Activated naive CD4-positive, alpha-beta T cell treated with anti-CD3 and anti-CD28 coated beads for 36 hours (primary cell): ENCODE measurements at regions of chr22 and their contacts with region 1.

Region 1: DNA sequence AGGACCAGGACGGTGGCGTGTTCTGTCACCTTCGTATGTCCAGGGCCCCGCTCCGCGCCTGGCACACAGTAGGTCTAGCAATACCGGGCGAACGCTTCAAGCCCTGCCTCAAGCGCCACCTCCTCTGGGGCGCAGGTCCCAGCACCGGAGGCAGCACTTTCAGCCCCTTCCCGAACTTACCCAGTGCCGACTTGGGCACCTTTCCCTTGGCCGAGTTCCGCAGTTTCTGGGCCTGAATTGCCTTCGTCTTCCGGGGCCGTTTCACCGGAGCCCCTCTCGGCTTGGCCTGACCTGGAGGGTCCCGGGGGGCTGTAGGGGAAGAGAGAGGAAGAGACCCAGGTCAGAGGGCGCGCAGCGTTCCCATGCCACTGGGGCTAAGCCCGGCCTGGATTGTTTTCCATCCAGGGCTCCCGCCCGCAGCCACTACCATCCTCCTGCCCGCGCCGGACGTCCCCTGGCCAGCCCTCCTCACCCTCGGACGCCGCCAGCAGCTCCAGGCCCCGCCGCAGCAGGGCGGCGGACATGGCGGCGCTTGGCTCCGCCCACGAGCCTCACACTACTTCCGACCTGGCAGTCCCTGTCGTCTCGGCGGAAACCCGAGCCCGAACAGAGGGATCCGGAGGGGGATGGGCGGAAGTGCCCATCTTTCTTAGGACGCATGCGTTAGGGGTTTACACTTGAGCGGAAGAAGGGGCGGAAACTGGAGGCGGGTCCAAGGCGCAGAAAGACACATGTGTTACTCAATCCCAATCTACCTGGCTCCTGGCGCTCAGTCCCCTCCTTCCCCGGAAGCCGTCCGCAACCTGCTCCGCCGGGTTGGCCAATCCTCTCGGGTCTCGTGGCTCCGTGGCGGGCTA is at the start of gene RPS19BP1:
- DNase-seq: peak; percentile 100
- H3K4me3 Mint-ChIP-seq: peak within 1 kb of the TSS; percentile 94
- H3K27ac Mint-ChIP-seq: peak within 1 kb of the TSS; percentile 91
- H3K4me1 Mint-ChIP-seq: peaks cover 49% of the 10 kb centered on the region
- H3K27me3 Mint-ChIP-seq: no peaks in the 10 kb centered on the region
- total RNA-seq, gene RPS19BP1: 52.0 to 56.2 TPM

Region 2: GRCh38 chr22:39319270-39320022 is 213.0 kb before region 1 on chr22 and contains the start of gene RPL3:
- CTCF ChIA-PET with region 1: interaction called, 4 read pairs
- intact Hi-C with region 1: loop called (anchors 1 kb)
- DNase-seq: peak; percentile 94
- H3K4me3 Mint-ChIP-seq: peak within 1 kb of the TSS; percentile 99
- H3K27ac Mint-ChIP-seq: peak within 1 kb of the TSS; percentile 100
- H3K4me1 Mint-ChIP-seq: peaks cover 42% of the 10 kb centered on the region
- H3K27me3 Mint-ChIP-seq: no peaks in the 10 kb centered on the region
- total RNA-seq, gene RPL3: 3,434 to 3,511 TPM

Region 3: DNA sequence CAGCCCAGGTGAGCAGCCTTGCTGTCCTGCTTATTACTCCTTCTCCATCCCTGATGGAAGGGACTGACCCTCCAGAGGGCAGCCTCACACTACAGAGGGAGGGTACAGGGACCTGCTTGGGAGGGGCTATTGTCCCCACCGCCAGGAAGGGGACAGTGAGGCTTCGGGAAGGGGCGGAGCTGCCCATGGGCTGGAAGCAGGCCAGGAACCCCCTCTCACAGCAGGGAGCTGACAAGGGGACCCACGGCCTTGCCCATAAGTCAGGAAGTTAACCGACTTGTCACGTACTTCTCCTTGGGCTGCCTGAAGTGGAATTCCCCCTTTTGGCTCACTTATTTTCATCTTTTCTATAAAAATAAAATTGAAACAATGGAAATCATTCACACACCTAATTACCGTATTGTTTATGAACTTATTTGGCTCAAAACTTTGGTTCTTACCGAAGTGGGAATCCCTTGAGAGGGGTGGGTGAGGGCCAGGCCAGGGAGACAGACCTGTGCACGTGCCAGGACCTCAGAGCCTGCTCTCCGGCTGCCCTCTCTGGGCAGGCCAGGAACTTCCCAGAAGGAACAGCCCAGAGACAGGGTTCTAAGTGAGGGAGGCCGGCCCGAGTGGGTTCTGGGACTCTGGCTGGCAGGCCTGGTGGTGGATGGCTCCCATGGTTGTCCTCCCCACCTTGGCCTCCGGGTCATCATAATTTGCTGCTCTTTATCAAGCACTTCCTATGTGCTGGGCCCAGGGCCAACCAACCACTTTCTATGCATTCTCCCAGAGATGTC is 69.8 kb before region 1 on chr22:
- CTCF ChIA-PET with region 1: no interaction called
- intact Hi-C with region 1: no loop called
- DNase-seq: no peak
- H3K4me3 Mint-ChIP-seq: no peak overlapping the region
- H3K27ac Mint-ChIP-seq: no peak overlapping the region
- H3K4me1 Mint-ChIP-seq: peaks cover 5% of the 10 kb centered on the region
- H3K27me3 Mint-ChIP-seq: peaks cover 26% of the 10 kb centered on the region

Region 4: GRCh38 chr22:39490135-39490798 is 42.2 kb before region 1 on chr22:
- CTCF ChIA-PET with region 1: interaction called, 208 read pairs
- intact Hi-C with region 1: loop called (anchors 1 kb)
- DNase-seq: peak; percentile 85
- H3K4me3 Mint-ChIP-seq: no peak overlapping the region
- H3K27ac Mint-ChIP-seq: no peak overlapping the region
- H3K4me1 Mint-ChIP-seq: peaks cover 5% of the 10 kb centered on the region
- H3K27me3 Mint-ChIP-seq: no peaks in the 10 kb centered on the region

Region 5: DNA sequence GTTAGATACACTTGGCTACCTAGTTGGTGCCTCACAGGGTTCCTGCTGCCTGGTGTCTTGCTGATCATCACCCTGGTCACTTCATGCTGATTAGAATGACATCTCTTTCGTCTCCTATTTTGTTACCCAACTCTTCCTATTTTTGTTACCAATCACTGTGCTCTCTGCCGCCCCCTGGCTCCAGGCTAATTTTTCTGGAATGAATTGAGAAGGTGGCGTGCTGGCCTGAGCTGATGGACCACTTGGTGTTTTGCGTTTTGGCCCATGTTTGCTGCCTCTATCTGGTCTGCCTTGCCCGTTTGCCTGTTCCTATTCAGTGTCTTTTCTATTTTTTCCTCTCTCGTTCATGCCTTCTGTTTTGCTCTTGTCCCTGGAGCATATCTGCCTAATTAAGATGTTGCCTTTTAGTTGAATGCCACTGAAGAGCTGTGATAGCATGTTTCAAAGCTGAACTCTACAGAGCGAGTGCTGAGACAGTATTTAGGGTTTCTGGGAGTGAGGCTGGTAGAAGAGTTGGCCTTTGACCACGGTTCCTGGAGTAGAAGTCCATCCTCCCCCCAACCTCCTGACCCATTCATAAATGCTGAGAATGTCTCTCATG is 18.0 kb before region 1 on chr22:
- CTCF ChIA-PET with region 1: interaction called, 49 read pairs
- intact Hi-C with region 1: no loop called
- DNase-seq: peak; percentile 76
- H3K4me3 Mint-ChIP-seq: no peak overlapping the region
- H3K27ac Mint-ChIP-seq: peak overlapping the region; percentile 16
- H3K4me1 Mint-ChIP-seq: peaks cover 46% of the 10 kb centered on the region
- H3K27me3 Mint-ChIP-seq: no peaks in the 10 kb centered on the region

Region 6: DNA sequence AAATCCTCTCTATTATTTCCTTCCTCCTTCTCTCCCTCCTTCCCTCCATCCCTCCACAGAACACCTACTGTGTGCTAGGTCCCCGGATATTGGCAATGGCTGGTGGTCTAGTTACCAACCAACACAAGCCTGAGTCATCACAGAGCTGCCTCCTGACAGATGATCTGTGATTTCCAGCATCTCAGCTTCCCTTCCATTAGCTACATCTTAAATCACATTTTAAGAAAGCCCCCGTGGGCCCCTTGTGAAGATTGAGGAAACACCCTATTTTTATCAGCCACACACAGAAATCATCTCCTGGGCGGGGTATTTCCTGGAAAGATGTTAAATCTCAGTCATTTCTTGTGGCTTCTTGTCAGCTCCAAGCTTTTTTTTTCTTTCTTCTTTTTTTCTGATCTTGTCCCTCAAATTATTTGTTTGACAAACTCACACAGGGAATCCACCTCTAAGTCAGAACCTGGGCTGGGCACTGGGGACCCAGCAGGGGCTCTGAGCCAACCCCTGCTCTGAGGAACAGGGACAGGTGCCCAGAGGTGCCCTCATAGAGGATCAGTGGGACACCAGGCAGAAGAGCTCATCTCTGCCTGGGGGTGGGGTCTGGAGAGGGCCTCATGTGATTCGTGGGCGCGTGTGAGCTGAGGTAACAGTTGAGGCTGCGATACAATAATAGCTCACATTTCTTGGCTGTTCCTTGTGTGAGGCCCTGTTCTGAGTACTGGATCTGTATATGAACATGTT is 80.5 kb after region 1 on chr22:
- CTCF ChIA-PET with region 1: interaction called, 3 read pairs
- intact Hi-C with region 1: loop called (anchors 1 kb)
- DNase-seq: peak; percentile 85
- H3K4me3 Mint-ChIP-seq: no peak overlapping the region
- H3K27ac Mint-ChIP-seq: peak overlapping the region; percentile 86
- H3K4me1 Mint-ChIP-seq: peaks cover 25% of the 10 kb centered on the region
- H3K27me3 Mint-ChIP-seq: no peaks in the 10 kb centered on the region

Region 7: DNA sequence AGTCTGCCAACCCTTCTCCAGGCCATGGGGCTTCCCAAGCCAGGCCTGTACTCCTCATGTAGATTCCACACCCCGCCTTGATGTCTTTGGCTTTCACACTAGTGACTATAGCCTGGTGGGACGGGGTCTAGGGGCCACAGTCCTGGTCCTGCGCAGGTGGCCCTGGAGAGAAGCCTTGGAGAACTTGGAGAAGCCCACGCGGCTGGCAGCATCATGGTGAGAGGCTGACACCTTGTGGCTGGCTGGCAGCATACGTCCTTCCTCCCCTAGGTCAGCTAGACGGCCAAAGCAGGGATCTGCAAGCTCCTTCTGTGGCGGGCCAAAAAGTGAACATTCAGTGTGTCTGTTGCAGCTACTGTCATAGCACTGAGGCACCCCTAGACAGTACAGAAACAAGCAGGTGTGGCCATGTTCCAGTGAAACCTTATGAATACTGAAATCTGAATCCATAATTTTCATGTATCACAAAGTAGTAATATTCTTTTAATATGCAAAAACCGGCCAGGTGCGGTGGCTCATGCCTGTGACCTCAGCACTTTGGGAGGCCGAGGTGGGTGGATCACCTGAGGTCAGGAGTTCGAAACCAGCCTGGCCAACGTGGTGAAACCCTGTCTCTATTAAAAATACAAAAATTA is 504.3 kb after region 1 on chr22:
- CTCF ChIA-PET with region 1: interaction called, 49 read pairs
- intact Hi-C with region 1: no loop called
- DNase-seq: peak; percentile 71
- H3K4me3 Mint-ChIP-seq: no peak overlapping the region
- H3K27ac Mint-ChIP-seq: no peak overlapping the region
- H3K4me1 Mint-ChIP-seq: no peaks in the 10 kb centered on the region
- H3K27me3 Mint-ChIP-seq: no peaks in the 10 kb centered on the region

Region 8: GRCh38 chr22:41285820-41286638 is 1753.6 kb after region 1 on chr22 and contains the start of gene RANGAP1:
- CTCF ChIA-PET with region 1: no interaction called
- intact Hi-C with region 1: loop called (anchors 10 kb)
- DNase-seq: peak; percentile 99
- H3K4me3 Mint-ChIP-seq: peak within 1 kb of the TSS; percentile 98
- H3K27ac Mint-ChIP-seq: peak within 1 kb of the TSS; percentile 100
- H3K4me1 Mint-ChIP-seq: peaks cover 37% of the 10 kb centered on the region
- H3K27me3 Mint-ChIP-seq: no peaks in the 10 kb centered on the region
- total RNA-seq, gene RANGAP1: 173 to 174 TPM